ENCODE measurements at regions of chr18 and their contacts with region 1.

Region 1: GRCh38 chr18:22983175-22983574 is 50.0 kb downstream of the RBBP8 start:
- DNase-seq: no peak
- ATAC-seq: no peak

Region 2: GRCh38 chr18:22846088-22846683 is 137.0 kb before region 1 on chr18:
- intact Hi-C with region 1: loop called (anchors 10 kb)
- DNase-seq: no peak
- ATAC-seq: no peak

Region 3: GRCh38 chr18:22933206-22933957 is 49.8 kb before region 1 on chr18 and contains the start of gene RBBP8:
- intact Hi-C with region 1: loop called (anchors 5 kb)
- DNase-seq: peak; percentile 92
- ATAC-seq: peak; percentile 98
- total RNA-seq, gene RBBP8: 6.1 TPM

Measured in left ventricle myocardium superior (tissue), 1 donor.